ENCODE measurements at regions of chr19 and their contacts with region 1.

Region 1: GRCh38 chr19:45130888-45131615 is 29.7 kb downstream of the NKPD1 start:
- DNase-seq: peak; percentile 63 to 68
- H3K4me3 ChIP-seq: no peak overlapping the region
- H3K27ac ChIP-seq: peak overlapping the region in 1 of 5 donors; percentile 8
- H3K4me1 ChIP-seq: peaks cover under 1 to 31% (median 12%) of the 10 kb centered on the region in 4 donors
- H3K27me3 ChIP-seq: no peaks in the 10 kb centered on the region
- CTCF ChIP-seq: peak in 4 of 7 experiments; percentile 10 to 39 (median 18)
- EP300 ChIP-seq: no peak
- POLR2A ChIP-seq: no peak

Region 2: GRCh38 chr19:45087531-45087930 is 43.5 kb before region 1 on chr19:
- intact Hi-C with region 1: loop called (anchors 5 kb)
- DNase-seq: no peak
- H3K4me3 ChIP-seq: no peak overlapping the region
- H3K27ac ChIP-seq: peak overlapping the region in 2 of 5 donors; percentile 1 to 9
- H3K4me1 ChIP-seq: peaks cover 12 to 55% (median 20%) of the 10 kb centered on the region in 4 donors
- H3K27me3 ChIP-seq: no peaks in the 10 kb centered on the region
- CTCF ChIP-seq: no peak
- EP300 ChIP-seq: no peak
- POLR2A ChIP-seq: no peak

Region 3: DNA sequence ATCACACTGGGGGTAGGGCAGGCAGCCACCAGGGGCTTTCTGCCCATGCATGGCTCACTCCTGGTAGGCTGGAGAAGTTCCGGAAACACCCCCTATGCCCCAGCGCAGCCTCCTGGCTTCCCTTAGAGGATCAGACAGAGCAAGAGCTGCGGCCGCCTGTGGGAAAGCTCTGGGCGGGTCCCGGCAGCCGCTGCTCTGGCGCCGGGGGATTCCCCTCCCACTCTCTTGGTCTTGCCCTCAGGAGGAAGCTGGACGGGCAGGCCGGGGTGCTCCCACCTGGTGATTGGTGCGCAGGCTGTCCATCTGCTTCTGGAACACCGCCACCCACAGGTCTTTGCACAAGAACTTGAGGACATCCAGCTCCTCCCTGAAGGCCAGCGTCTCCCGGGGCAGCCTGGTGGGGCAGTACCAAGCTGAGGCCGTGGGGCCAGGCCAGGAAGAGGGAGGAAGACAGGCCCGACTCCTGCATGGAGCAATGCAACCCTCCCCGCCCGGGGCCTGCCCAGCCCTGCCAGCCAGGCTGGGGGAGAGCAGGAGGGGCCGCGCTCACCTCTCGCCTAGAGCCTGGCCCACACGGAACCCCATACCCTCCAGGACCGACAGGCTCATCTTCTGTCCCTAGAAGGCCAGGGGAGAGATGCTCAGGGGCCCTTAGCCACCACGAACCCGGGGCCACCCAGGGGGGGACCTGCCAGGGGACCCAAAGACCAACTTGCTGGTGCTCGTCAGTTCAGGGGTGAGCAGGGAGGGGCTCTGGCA is 33.7 kb after region 1 on chr19:
- intact Hi-C with region 1: no loop called
- DNase-seq: peak; percentile 82 to 89
- H3K4me3 ChIP-seq: no peak overlapping the region
- H3K27ac ChIP-seq: no peak overlapping the region
- H3K4me1 ChIP-seq: peaks cover 7 to 38% (median 34%) of the 10 kb centered on the region in 4 donors
- H3K27me3 ChIP-seq: peaks cover 0 to 30% (median 20%) of the 10 kb centered on the region in 3 donors
- CTCF ChIP-seq: no peak
- EP300 ChIP-seq: no peak
- POLR2A ChIP-seq: no peak

Region 4: DNA sequence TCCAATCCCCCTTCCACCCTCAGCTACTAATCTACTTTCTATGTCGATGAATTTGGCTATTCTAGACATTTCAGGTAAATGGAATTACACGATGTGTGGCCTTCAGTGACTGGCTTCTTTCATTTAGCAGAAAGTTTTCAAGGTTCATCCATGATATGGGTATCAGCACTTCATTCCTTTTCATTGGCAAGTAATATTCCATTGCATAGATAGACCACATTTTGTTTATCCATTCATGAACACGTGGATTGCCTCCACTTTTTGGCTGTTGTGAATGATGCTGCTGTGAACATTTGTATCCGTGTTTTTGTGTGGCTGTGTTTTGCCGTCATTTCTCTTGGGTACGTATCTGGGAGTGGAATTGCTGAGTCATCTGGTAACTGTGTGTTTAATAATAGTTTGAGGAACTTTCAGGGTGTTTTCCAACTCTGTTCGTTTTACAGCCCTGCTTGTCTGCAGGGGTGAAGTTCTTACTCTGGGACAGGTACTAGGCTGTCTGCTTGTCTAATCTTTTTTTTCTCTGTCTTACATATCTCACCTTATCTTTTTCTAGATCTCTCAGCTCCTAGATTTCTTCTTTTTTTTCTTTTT is 152.5 kb after region 1 on chr19:
- intact Hi-C with region 1: no loop called
- DNase-seq: no peak
- H3K4me3 ChIP-seq: no peak overlapping the region
- H3K27ac ChIP-seq: no peak overlapping the region
- H3K4me1 ChIP-seq: no peaks in the 10 kb centered on the region
- H3K27me3 ChIP-seq: no peaks in the 10 kb centered on the region
- CTCF ChIP-seq: no peak
- EP300 ChIP-seq: no peak
- POLR2A ChIP-seq: no peak

Measured in stomach (tissue), 19 donors.